Right ventricle myocardium superior (tissue), 1 donor: ENCODE measurements at regions of chr16 and their contacts with region 1.

Region 1: GRCh38 chr16:53282975-53283946 is 151.0 kb upstream of the RBL2 start:
- DNase-seq: no peak
- ATAC-seq: no peak

Region 2: GRCh38 chr16:53235851-53236250 is 47.4 kb before region 1 on chr16:
- intact Hi-C with region 1: loop called (anchors 10 kb)
- DNase-seq: no peak
- ATAC-seq: no peak

Region 3: DNA sequence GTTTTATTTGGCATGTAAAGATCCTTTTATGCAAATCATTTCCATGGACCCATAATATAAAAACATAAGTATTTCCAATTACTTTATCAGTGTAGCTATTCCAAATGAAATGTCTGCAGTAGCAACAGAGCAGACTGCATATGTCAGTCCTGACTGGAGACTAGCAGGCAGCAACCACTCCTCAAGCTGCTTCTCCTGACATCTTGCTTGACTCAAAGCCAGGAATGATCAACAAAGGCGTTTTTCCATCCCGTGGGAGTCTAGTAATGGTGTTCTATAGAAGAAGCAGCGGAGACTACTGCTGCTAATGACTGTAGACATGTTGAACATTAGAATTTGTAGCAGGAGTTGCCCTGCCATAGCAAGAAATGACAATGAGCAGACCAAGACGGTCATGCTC is 292.9 kb after region 1 on chr16:
- intact Hi-C with region 1: no loop called
- DNase-seq: no peak
- ATAC-seq: no peak